A673 (cell line): ENCODE measurements at regions of chr11 and their contacts with region 1.

Region 1: GRCh38 chr11:119481021-119481666 is 58.2 kb upstream of the THY1 start:
- DNase-seq: peak; percentile 81
- H3K4me3 ChIP-seq: no peak overlapping the region
- H3K27ac ChIP-seq: no peak overlapping the region
- H3K4me1 ChIP-seq: no peaks in the 10 kb centered on the region
- H3K27me3 ChIP-seq: no peaks in the 10 kb centered on the region
- CTCF ChIP-seq: peak; percentile 100

Region 2: DNA sequence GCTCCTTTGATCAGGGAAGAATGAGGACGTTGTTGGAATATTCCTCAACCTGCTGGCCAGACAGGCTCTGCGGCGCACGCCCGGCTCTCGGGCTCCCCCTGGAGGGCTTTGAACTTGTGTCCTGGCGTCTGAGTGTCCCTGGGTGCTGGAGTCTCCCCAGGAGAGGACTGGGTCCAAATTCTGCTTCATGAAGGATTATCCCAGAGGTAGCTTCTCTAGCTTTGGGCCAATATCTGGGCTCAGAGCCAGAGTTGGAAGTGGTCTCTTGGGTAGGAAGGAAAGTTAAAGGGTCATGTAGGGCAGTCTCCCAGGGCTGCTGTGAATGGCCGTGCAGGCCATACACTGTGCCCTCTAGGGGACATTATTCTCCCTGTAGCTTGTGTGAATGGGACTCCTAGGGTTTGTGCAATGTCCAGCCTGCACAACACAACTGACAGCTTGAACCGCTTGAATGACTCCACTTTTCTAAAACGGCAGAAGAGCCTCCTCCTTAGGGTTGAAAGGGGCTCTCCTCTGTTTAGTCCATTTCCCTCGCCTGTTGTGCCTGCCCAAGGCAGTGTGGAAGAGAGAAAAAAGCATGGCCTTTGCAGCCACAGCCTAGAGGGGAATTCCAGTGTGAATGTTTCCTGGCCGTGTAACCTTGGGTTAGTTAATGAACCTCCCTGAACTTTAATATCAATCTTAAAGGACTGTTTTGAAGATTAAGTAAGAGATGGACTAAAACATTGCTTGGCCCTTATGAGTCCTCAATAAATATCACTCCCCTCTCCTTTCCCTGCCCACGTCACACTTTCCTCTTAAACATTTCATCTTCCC is 53.0 kb after region 1 on chr11:
- CTCF ChIA-PET with region 1: interaction called, 4 read pairs
- POLR2A ChIA-PET with region 1: no interaction called
- intact Hi-C with region 1: loop called (anchors 2 kb)
- DNase-seq: peak; percentile 73
- H3K4me3 ChIP-seq: no peak overlapping the region
- H3K27ac ChIP-seq: no peak overlapping the region
- H3K4me1 ChIP-seq: no peaks in the 10 kb centered on the region
- H3K27me3 ChIP-seq: no peaks in the 10 kb centered on the region
- CTCF ChIP-seq: peak; percentile 97

Region 3: DNA sequence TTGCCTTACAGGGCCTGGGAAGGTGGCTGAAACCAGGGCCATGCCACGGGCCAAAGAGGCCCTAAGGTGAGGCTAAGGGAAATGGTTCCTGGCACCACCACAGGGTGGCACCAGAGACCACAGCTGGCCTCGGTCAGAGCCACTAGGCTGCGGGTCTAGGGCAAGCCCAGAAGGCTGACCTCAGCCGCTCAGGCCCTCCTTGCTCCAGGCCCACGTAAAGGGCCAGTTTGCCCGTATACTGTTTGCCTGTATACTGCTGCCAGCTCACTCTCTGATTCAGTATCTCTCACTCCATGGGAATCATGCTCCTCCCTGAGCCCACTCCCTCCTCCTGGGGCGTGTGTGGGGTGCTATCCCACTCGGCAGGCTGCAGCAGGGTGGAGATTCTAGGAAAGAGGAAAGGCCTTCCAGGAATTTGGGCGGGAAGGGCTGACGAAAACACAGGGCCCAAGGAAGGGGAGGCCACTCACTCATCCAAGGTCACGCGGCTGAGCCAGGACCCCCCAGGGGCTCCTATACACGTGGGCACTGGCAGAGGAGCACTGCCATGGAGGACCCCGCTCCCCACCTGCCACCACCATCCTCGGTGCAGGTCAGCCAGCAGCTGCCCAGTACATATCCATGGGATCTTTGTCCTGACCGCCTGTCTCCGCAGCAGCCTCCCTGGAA is 185.5 kb after region 1 on chr11:
- CTCF ChIA-PET with region 1: no interaction called
- POLR2A ChIA-PET with region 1: no interaction called
- intact Hi-C with region 1: loop called (anchors 1 kb)
- DNase-seq: peak; percentile 24
- H3K4me3 ChIP-seq: no peak overlapping the region
- H3K27ac ChIP-seq: no peak overlapping the region
- H3K4me1 ChIP-seq: peaks cover 3% of the 10 kb centered on the region
- H3K27me3 ChIP-seq: no peaks in the 10 kb centered on the region
- CTCF ChIP-seq: peak; percentile 88

Region 4: GRCh38 chr11:119728651-119729580 is 247.8 kb after region 1 on chr11 and contains the start of gene NECTIN1:
- CTCF ChIA-PET with region 1: interaction called, 3 read pairs
- POLR2A ChIA-PET with region 1: no interaction called
- intact Hi-C with region 1: loop called (anchors 5 kb)
- DNase-seq: peak; percentile 92
- H3K4me3 ChIP-seq: peak within 1 kb of the TSS; percentile 63
- H3K27ac ChIP-seq: peak within 1 kb of the TSS; percentile 35
- H3K4me1 ChIP-seq: peaks cover 26% of the 10 kb centered on the region
- H3K27me3 ChIP-seq: peaks cover 13% of the 10 kb centered on the region
- CTCF ChIP-seq: peak; percentile 96
- total RNA-seq, gene NECTIN1: 9.8 and 10.1 TPM in 2 replicates

Region 5: DNA sequence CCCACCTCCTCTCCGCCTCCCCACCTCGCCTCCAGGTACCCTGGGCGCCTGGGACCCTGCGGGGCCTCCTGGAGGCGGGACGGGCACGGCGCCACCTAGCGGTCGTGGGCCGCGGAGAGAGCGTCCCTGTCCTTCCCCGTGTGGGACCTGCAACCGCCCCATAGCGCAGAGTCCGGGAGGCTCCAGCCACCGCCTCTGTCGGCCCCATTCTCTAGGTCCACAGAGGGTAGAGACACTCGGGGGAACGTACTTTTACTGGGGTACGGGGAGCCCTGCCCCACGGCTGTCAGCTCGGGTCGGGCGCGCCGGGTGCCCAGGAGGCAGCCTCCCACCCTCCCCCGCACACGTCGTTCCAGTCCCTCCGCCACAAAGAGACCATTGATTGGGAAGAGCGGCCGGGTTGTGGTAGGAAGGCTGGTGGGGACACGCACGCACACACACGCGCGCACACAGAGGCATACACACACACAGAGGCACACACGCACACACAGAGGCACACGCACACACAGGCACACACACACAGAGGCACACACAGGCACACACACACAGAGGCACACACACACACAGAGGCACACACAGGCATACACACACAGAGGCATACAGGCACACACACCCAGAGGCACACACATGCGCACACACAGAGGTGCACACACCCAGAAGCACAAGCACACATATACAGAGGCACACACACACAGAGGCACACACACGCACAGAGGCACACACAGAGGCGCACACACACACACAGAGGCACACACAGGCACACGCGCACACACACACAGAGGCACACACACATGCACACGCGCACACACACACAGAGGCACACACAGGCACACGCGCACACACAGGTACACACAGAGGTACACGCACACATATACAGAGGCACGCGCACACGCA is 260.5 kb after region 1 on chr11:
- CTCF ChIA-PET with region 1: no interaction called
- POLR2A ChIA-PET with region 1: no interaction called
- intact Hi-C with region 1: loop called (anchors 5 kb)
- DNase-seq: peak; percentile 66
- H3K4me3 ChIP-seq: peak overlapping the region; percentile 36
- H3K27ac ChIP-seq: no peak overlapping the region
- H3K4me1 ChIP-seq: peaks cover 14% of the 10 kb centered on the region
- H3K27me3 ChIP-seq: peaks cover 5% of the 10 kb centered on the region
- CTCF ChIP-seq: peak; percentile 98

Region 6: DNA sequence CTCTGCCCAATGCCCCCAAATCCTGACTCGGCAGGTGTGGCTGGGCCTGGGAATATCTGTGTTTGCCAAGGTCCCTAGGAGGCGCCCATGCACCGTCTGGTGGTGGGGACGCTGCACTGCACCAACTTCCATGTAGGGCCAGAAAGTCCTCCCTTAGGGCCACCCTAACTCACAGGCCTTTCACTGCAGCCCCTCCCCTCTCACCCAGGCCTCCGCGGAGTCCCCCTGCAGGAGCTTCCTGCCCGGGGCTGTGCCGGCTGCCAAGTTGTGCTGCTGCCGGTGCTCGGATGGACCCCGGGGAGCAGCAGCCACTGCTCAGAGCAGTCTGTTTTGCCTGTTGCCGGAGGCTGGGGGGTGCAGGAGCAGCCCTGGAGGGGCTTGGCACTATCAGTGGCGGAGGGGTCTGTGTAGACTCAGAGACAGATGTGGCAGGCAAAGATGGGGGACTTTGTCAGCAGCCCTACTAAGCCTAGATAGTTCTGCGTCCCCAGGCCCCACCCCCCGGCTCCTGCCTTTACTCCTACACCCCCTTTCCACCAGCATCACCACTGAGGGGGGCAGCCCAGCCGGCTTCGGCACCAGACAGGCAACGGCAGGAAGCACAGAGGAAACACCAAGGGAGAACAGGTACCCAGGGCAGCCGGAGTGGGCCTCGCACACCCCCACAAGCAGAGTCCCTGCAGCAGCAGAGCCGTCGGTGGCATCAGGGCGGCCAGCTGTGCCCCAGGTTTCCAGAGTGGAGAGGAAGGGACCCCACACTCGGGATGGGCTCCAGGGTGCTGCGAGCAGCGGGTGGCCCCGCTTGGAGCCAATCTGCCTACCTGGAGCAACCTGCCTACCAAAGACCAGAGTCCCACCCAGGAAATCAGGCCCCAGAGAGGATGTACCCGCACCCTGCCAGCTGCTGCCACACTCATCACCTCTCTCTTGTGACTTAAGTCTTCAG is 532.5 kb after region 1 on chr11:
- CTCF ChIA-PET with region 1: no interaction called
- POLR2A ChIA-PET with region 1: no interaction called
- intact Hi-C with region 1: loop called (anchors 5 kb)
- DNase-seq: peak; percentile 88
- H3K4me3 ChIP-seq: no peak overlapping the region
- H3K27ac ChIP-seq: no peak overlapping the region
- H3K4me1 ChIP-seq: peaks cover 12% of the 10 kb centered on the region
- H3K27me3 ChIP-seq: peaks cover 21% of the 10 kb centered on the region
- CTCF ChIP-seq: peak; percentile 84

Region 7: GRCh38 chr11:120108154-120108865 is 627.2 kb after region 1 on chr11:
- CTCF ChIA-PET with region 1: no interaction called
- POLR2A ChIA-PET with region 1: no interaction called
- intact Hi-C with region 1: loop called (anchors 2 kb)
- DNase-seq: peak; percentile 75
- H3K4me3 ChIP-seq: no peak overlapping the region
- H3K27ac ChIP-seq: no peak overlapping the region
- H3K4me1 ChIP-seq: no peaks in the 10 kb centered on the region
- H3K27me3 ChIP-seq: peaks cover 6% of the 10 kb centered on the region
- CTCF ChIP-seq: peak; percentile 99